Panc1 (cell line): ENCODE measurements at regions of chr3 and their contacts with region 1.

Region 1: GRCh38 chr3:163523375-163523774 is 1554.9 kb downstream of the SI start:
- DNase-seq: no peak
- ATAC-seq: no peak
- H3K4me3 ChIP-seq: no peak overlapping the region
- H3K27ac ChIP-seq: no peak overlapping the region
- H3K4me1 ChIP-seq: no peaks in the 10 kb centered on the region
- H3K27me3 ChIP-seq: no peaks in the 10 kb centered on the region
- CTCF ChIP-seq: no peak

Region 2: DNA sequence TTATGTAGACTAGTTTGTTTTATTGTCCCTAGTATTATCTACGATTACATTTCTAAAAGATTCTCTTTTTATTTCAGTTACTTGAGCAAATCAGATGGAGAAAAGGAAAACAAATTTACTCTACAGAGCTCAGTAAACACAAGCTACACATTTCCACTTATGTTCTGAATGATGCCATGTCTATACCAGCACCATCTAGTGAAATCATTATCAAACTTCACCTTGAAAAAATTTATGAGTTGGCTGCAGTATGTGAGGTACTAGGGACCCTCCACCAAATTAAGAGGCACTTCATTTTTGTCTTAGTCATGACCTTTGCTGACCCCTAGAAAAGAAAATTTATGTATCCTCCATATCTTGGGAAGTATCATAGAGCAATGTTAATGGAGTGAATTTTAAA is 727.6 kb after region 1 on chr3:
- CTCF ChIA-PET with region 1: interaction called, 18 read pairs
- POLR2A ChIA-PET with region 1: no interaction called
- in situ Hi-C with region 1: no loop called
- intact Hi-C with region 1: no loop called
- DNase-seq: no peak
- ATAC-seq: no peak
- H3K4me3 ChIP-seq: no peak overlapping the region
- H3K27ac ChIP-seq: no peak overlapping the region
- H3K4me1 ChIP-seq: no peaks in the 10 kb centered on the region
- H3K27me3 ChIP-seq: no peaks in the 10 kb centered on the region
- CTCF ChIP-seq: no peak